ENCODE measurements at regions of chr1 and their contacts with region 1.

Region 1: GRCh38 chr1:212070720-212071302 is 35.3 kb downstream of the DTL start:
- DNase-seq: peak; percentile 8
- H3K4me3 ChIP-seq: no peak overlapping the region
- H3K27ac ChIP-seq: no peak overlapping the region
- H3K27me3 ChIP-seq: no peaks in the 10 kb centered on the region
- CTCF ChIP-seq: peak; percentile 79

Region 2: GRCh38 chr1:211648980-211649934 is 421.6 kb before region 1 on chr1:
- CTCF ChIA-PET with region 1: no interaction called
- POLR2A ChIA-PET with region 1: no interaction called
- DNase-seq: no peak
- H3K4me3 ChIP-seq: no peak overlapping the region
- H3K27ac ChIP-seq: no peak overlapping the region
- H3K27me3 ChIP-seq: no peaks in the 10 kb centered on the region
- CTCF ChIP-seq: peak; percentile 62

Region 3: DNA sequence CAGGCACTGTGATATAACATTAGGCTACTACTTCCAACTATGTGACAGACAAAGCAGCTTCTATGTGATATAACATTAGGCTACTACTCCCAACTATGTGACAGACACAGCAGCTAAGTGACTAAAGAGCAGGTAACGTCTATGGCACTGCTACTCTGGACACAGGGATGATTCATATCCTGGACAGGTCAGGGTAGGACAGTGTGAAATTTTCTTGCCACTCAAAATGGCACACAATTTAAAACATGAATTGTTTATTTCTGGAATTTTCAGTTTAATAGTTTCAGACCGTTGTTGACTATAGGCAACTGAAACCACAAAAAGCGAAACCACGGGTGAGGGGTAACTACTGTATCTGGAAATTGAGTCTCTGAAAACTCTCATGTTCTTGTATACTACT is 30.2 kb before region 1 on chr1:
- CTCF ChIA-PET with region 1: interaction called, 25 read pairs
- POLR2A ChIA-PET with region 1: no interaction called
- DNase-seq: no peak
- H3K4me3 ChIP-seq: no peak overlapping the region
- H3K27ac ChIP-seq: no peak overlapping the region
- H3K27me3 ChIP-seq: no peaks in the 10 kb centered on the region
- CTCF ChIP-seq: no peak

Region 4: GRCh38 chr1:212162635-212163034 is 91.8 kb after region 1 on chr1:
- CTCF ChIA-PET with region 1: interaction called, 11 read pairs
- POLR2A ChIA-PET with region 1: no interaction called
- DNase-seq: peak; percentile 57
- H3K4me3 ChIP-seq: no peak overlapping the region
- H3K27ac ChIP-seq: no peak overlapping the region
- H3K27me3 ChIP-seq: no peaks in the 10 kb centered on the region
- CTCF ChIP-seq: no peak

Region 5: GRCh38 chr1:212284744-212285684 is 214.2 kb after region 1 on chr1 and contains the start of gene PPP2R5A:
- CTCF ChIA-PET with region 1: interaction called, 133 read pairs
- POLR2A ChIA-PET with region 1: interaction called, 3 read pairs
- DNase-seq: peak; percentile 99
- H3K4me3 ChIP-seq: peak within 1 kb of the TSS; percentile 92
- H3K27ac ChIP-seq: peak within 1 kb of the TSS; percentile 77
- H3K27me3 ChIP-seq: no peaks in the 10 kb centered on the region
- CTCF ChIP-seq: peak; percentile 23; the same call in 1 of the 2 replicates
- polyA plus RNA-seq, gene PPP2R5A: 23.0 and 31.5 TPM in 2 replicates

Region 6: GRCh38 chr1:212328248-212328647 is 257.4 kb after region 1 on chr1:
- CTCF ChIA-PET with region 1: interaction called, 16 read pairs
- POLR2A ChIA-PET with region 1: no interaction called
- DNase-seq: peak; percentile 30
- H3K4me3 ChIP-seq: no peak overlapping the region
- H3K27ac ChIP-seq: no peak overlapping the region
- H3K27me3 ChIP-seq: no peaks in the 10 kb centered on the region
- CTCF ChIP-seq: no peak

Region 7: DNA sequence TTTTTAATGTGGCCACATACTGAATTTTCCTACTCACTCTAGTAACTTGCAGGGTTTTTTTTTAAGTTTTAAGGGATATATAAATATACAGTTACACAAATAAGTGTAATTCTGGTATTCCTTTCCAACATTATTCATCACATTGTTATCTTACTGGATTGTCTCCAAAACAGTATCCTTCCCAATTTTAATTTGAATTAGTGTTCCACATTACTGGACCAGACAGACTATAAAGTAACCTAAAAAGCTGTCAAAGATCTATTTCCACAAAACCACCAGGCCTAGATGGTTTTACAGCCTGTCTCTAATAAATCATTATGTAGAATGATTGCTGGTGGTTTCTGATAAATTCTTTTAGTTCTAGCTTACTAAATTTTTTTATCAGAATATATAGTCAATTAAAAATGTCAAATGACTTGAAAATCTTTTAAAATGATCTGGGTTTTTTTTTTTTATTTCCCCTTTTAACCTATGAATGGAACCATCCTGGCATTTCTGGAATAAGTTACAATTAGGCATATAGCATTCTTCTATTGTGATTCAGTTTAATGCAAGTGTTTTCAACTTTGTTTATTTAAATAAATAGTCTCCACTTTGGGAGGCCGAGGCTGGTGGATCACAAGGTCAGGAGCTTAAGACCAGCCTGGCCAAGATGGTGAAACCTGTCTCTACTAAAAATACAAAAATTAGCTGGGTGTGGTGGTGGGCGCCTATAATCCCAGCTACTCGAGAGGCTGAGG is 284.6 kb after region 1 on chr1:
- CTCF ChIA-PET with region 1: interaction called, 42 read pairs
- POLR2A ChIA-PET with region 1: interaction called, 3 read pairs
- DNase-seq: no peak
- H3K4me3 ChIP-seq: no peak overlapping the region
- H3K27ac ChIP-seq: no peak overlapping the region
- H3K27me3 ChIP-seq: no peaks in the 10 kb centered on the region
- CTCF ChIP-seq: no peak

Region 8: GRCh38 chr1:212455803-212456528 is 385.2 kb after region 1 on chr1:
- CTCF ChIA-PET with region 1: interaction called, 283 read pairs
- POLR2A ChIA-PET with region 1: interaction called, 3 read pairs
- DNase-seq: peak; percentile 72
- H3K4me3 ChIP-seq: peak overlapping the region; percentile 4; the same call in 1 of the 2 replicates
- H3K27ac ChIP-seq: no peak overlapping the region
- H3K27me3 ChIP-seq: no peaks in the 10 kb centered on the region
- CTCF ChIP-seq: peak; percentile 96